Breast epithelium (tissue), 4 donors: ENCODE measurements at regions of chr5 and their contacts with region 1.

Region 1: DNA sequence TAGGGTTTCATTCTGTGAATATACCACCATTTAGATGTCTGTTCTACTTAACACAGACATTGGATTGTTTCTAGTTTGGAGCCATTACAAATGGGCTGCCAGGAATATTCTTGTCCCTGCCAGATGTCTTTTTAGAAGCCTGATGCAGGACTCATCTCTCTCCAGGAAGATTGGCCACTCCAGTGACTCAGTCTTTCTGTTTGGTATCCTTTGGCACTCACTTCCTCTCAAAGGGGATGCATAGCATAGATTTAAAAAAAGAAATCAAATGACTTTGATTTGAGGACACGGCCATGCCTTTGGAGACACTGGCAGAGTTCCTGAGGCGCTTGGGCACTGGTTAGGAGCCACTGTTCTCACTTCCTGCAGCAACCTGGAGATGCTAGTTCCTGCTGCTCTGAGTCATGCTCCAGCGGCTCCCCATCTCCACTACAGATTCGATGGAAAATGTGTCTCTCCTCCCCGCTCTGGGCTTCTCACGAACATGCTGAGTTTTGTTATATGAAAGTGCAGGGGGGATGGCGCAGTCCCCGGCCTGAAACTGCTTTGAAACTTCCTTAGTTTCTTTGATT is 3.5 kb upstream of the ZNF366 start:
- DNase-seq: peak in 1 of 2 donors; percentile 24
- H3K4me3 ChIP-seq: no peak overlapping the region
- H3K27ac ChIP-seq: peak overlapping the region; percentile 18 to 40
- H3K4me1 ChIP-seq: no peaks in the 10 kb centered on the region
- H3K27me3 ChIP-seq: no peaks in the 10 kb centered on the region
- CTCF ChIP-seq: no peak
- POLR2A ChIP-seq: no peak

Region 2: GRCh38 chr5:71887680-71888079 is 623.0 kb before region 1 on chr5:
- intact Hi-C with region 1: no loop called
- DNase-seq: no peak
- H3K4me3 ChIP-seq: no peak overlapping the region
- H3K27ac ChIP-seq: no peak overlapping the region
- H3K4me1 ChIP-seq: no peaks in the 10 kb centered on the region
- H3K27me3 ChIP-seq: no peaks in the 10 kb centered on the region
- CTCF ChIP-seq: no peak
- POLR2A ChIP-seq: no peak

Region 3: DNA sequence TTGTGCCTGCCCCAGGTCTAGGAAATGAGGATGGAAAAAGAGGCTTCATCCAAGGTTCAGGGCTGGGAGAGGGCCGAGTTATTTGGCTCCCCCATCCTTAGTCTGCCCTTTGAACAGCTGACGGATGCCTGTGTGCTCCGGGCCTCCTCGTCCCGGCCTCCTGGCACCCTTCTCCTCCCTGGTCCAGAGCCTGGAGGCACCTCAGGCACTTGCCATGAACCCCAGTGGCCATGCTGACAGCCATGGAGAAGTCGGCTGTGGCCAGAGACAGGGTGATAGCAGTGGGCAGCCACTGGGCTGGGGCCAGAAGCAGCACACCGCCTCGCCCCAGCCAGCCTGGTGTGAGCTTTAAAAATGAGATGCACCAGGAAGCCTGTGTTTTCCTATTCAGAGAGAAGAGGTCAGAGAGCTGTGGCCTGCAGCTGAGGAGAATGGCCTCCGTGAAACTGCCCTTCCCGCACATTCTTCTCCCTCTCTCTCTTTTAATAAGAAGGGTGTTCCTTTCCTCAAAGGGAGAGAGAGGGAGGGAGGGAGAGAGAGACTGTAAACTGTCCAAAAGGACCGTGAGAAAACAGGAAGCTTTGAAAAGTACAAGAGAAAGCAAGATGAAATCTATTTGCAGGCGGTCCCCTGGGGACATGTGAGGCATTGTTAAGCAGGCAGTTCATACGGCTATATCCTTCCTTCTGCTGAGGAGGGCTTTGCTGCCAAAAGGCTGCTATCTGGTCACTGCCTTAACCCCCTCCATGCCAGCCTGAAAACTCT is 58.8 kb before region 1 on chr5:
- intact Hi-C with region 1: loop called (anchors 2 kb)
- DNase-seq: peak in 1 of 2 donors; percentile 60
- H3K4me3 ChIP-seq: peak overlapping the region in 1 of 3 donors; percentile 46
- H3K27ac ChIP-seq: peak overlapping the region; percentile 95 to 99
- H3K4me1 ChIP-seq: peaks cover 9 to 26% of the 10 kb centered on the region in 2 donors
- H3K27me3 ChIP-seq: no peaks in the 10 kb centered on the region
- CTCF ChIP-seq: no peak
- POLR2A ChIP-seq: no peak